Activated CD4-positive, alpha-beta T cell treated with anti-CD3 and anti-CD28 coated beads for 36 hours (primary cell): ENCODE measurements at regions of chr7 and their contacts with region 1.

Region 1: GRCh38 chr7:101165075-101165957 is at the start of gene VGF:
- DNase-seq: peak; percentile 97
- ATAC-seq: peak; percentile 79
- H3K4me3 Mint-ChIP-seq: peak within 1 kb of the TSS; percentile 66
- H3K27ac Mint-ChIP-seq: peak within 1 kb of the TSS; percentile 38
- H3K4me1 Mint-ChIP-seq: peaks cover 57% of the 10 kb centered on the region
- H3K27me3 Mint-ChIP-seq: peaks cover 52% of the 10 kb centered on the region
- total RNA-seq, gene VGF: 0.09 to 0.11 TPM

Region 2: GRCh38 chr7:100874577-100875355 is 290.6 kb before region 1 on chr7 and contains the start of gene SRRT:
- CTCF ChIA-PET with region 1: no interaction called
- POLR2A ChIA-PET with region 1: no interaction called
- intact Hi-C with region 1: no loop called
- DNase-seq: peak; percentile 99
- ATAC-seq: peak; percentile 95
- H3K4me3 Mint-ChIP-seq: peak within 1 kb of the TSS; percentile 99
- H3K27ac Mint-ChIP-seq: peak within 1 kb of the TSS; percentile 99
- H3K4me1 Mint-ChIP-seq: peaks cover 45% of the 10 kb centered on the region
- H3K27me3 Mint-ChIP-seq: no peaks in the 10 kb centered on the region
- total RNA-seq, gene SRRT: 253 to 260 TPM

Region 3: DNA sequence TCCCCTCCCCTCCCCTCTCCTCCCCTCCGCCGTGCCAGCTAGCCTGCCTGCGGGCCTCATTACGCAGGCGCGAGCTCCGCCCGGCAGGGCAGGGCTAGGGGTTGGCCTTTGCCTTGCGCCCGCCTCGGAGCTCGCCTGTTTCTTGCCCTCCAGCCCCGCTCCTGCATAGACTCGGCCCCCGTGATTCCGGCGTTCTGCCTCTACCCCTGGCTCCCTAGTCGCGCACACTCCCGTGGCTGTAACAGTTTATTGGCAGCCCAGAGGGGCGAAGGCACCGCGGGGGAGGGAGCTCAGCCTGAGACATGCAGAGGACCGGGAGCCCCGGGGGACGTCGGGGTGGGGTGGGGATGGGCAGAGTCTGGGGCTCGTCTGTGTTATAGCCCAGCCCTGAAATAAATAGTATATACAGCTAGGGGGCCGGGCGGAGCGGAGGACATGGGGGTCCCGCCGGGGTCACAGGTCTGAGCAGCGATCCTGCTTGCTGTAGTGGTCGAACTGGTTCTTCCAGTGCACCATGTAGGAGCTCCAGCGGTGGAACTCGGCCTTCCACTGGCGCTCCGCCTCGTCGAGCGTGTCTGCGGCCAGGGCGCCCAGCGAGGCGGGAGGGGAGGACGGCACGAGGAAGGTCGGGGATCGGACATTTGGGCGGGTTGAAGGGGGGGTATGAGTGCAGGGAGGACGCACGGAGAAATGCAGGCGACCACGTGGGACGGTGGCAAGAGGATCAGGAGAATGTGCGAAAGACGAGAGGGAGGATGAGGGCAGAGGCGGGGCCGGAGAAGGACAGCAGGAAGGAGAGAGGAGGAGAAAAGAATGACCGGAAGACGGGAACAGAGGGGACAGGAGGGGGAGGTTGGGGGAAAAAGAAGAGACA is 275.3 kb before region 1 on chr7:
- CTCF ChIA-PET with region 1: interaction called, 3 read pairs
- POLR2A ChIA-PET with region 1: no interaction called
- intact Hi-C with region 1: loop called in 1 of 2 experiments (anchors 5 kb)
- DNase-seq: peak; percentile 96
- ATAC-seq: peak; percentile 95
- H3K4me3 Mint-ChIP-seq: peak overlapping the region; percentile 77
- H3K27ac Mint-ChIP-seq: no peak overlapping the region
- H3K4me1 Mint-ChIP-seq: peaks cover 38% of the 10 kb centered on the region
- H3K27me3 Mint-ChIP-seq: peaks cover 14% of the 10 kb centered on the region

Region 4: GRCh38 chr7:101108962-101109759 is 56.2 kb before region 1 on chr7:
- CTCF ChIA-PET with region 1: no interaction called
- POLR2A ChIA-PET with region 1: no interaction called
- intact Hi-C with region 1: no loop called
- DNase-seq: no peak
- ATAC-seq: no peak
- H3K4me3 Mint-ChIP-seq: no peak overlapping the region
- H3K27ac Mint-ChIP-seq: no peak overlapping the region
- H3K4me1 Mint-ChIP-seq: no peaks in the 10 kb centered on the region
- H3K27me3 Mint-ChIP-seq: peaks cover 13% of the 10 kb centered on the region